ENCODE measurements at regions of chr12 and their contacts with region 1.

Region 1: DNA sequence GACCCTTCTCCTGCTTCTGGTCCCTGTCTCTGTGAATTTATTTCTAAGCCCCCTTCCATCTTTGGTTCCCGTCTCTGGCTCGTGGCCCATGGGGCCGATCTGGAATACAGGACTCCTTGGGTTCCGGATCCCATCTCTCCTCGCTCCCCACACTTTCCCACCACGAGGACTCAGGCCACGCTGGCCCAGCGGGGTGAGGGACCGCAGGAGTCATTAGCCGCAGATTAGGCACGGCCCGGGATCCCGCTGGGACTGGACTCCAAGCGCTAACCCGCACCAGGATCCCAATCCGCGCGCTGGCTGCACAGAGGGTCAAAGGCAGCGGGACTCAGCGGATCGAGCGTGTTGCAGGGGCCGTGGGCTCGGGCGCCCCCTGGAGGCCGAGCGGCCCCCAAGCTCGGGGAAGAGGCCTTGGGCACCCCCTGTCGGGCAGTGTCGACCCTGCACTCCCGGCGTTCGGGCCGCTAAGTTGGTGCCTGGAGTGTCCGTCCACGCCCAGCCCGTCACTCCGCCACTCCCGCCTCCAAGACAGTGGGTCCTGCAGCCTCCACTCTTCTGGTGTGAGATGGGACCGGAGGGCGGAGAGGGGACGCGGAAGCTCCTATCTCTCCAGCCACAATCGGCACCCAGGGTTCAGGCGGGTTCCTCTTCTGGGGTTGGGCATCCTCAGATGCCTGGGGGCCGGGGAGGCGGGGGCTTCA is 9.5 kb downstream of the SHMT2 start:
- DNase-seq: peak; percentile 44
- H3K4me3 ChIP-seq: peak overlapping the region; percentile 60
- H3K27me3 ChIP-seq: no peaks in the 10 kb centered on the region; the same call in 1 of the 2 replicates
- CTCF ChIP-seq: peak; percentile 100

Region 2: DNA sequence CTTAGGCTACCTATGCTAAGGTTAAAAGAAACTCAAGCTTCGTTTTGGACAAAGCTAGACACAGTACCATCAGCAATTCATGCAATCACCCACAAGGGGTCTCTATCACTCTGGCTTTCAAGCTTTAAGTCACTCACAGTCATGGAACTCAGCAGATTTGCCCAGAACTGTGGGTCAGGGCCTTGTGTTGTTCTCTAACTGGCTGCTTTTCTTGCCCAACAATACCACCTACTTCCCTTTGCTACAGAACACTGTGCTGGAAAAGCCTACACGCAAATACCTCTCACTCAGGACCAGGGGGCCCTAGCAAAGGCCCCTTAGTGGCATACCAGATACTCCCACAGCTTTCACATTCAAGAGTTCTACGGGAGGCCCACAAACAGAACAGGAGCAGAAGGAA is 169.5 kb before region 1 on chr12:
- CTCF ChIA-PET with region 1: interaction called, 19 read pairs
- POLR2A ChIA-PET with region 1: no interaction called
- DNase-seq: no peak
- H3K4me3 ChIP-seq: no peak overlapping the region
- H3K27me3 ChIP-seq: no peaks in the 10 kb centered on the region
- CTCF ChIP-seq: peak; percentile 83

Region 3: GRCh38 chr12:57182921-57183790 is 55.8 kb before region 1 on chr12:
- CTCF ChIA-PET with region 1: interaction called, 13 read pairs
- POLR2A ChIA-PET with region 1: no interaction called
- DNase-seq: no peak
- H3K4me3 ChIP-seq: no peak overlapping the region
- H3K27me3 ChIP-seq: no peaks in the 10 kb centered on the region
- CTCF ChIP-seq: peak; percentile 84

Region 4: DNA sequence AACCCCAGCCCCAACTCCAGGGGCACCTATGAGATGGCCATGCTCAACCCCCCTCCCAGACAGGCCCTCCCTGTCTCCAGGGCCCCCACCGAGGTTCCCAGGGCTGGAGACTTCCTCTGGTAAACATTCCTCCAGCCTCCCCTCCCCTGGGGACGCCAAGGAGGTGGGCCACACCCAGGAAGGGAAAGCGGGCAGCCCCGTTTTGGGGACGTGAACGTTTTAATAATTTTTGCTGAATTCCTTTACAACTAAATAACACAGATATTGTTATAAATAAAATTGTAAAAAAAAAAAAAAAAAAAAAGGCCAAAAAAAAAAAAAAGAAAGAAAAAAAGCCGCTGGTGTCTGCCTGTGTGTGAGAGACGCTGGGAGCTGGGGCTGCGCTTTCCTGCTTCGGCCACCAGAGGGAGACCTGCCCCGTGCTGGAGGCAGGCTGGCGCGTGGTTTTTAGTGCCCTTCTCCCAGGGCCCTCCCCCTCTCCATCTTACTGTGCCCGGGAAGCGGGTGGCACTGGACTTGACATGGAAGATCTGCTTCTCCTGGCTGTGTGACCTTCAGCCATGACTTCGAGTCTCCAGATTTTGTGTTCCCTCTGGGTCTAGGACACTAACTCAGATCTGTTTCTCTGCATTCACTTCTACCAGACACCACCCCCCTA is 25.8 kb before region 1 on chr12:
- CTCF ChIA-PET with region 1: interaction called, 334 read pairs
- POLR2A ChIA-PET with region 1: interaction called, 4 read pairs
- DNase-seq: peak; percentile 42
- H3K4me3 ChIP-seq: no peak overlapping the region
- H3K27me3 ChIP-seq: peaks cover 4% of the 10 kb centered on the region; the same call in 1 of the 2 replicates
- CTCF ChIP-seq: peak; percentile 97

Region 5: GRCh38 chr12:57261428-57261865 is 22.4 kb after region 1 on chr12:
- CTCF ChIA-PET with region 1: interaction called, 20 read pairs
- POLR2A ChIA-PET with region 1: no interaction called
- DNase-seq: no peak
- H3K4me3 ChIP-seq: no peak overlapping the region
- H3K27me3 ChIP-seq: no peaks in the 10 kb centered on the region
- CTCF ChIP-seq: no peak

Region 6: DNA sequence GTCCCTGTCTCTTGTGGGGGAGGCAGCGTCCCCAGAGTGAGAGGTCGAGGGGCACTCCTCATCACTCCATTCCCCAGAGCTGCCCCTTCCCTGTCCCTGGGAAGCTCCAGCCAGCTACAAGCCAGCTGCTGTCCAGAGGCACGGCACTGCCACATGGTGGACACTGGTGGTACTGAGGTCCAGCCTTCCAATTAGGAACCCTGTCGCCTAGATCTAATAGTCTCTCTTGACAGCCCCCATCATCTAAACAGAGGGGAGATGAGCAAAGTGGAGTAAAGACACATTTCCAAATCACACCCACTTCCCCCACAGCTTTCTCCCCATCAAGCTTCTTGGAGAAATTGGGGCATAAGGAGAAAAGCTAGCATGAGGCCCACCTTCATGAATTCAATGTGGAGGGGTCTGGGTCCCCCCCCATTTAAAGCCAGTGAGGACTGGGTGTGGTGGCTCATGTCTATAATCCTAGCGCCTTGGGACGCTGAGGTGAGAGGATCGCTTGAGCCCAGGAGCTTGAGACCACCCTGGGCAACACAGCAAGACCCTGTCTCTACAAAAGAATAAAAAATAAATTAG is 214.0 kb after region 1 on chr12:
- CTCF ChIA-PET with region 1: interaction called, 56 read pairs
- POLR2A ChIA-PET with region 1: no interaction called
- DNase-seq: no peak
- H3K4me3 ChIP-seq: no peak overlapping the region
- H3K27me3 ChIP-seq: no peaks in the 10 kb centered on the region
- CTCF ChIP-seq: peak; percentile 96